HCT116 (cell line): ENCODE measurements at regions of chr1 and their contacts with region 1.

Region 1: DNA sequence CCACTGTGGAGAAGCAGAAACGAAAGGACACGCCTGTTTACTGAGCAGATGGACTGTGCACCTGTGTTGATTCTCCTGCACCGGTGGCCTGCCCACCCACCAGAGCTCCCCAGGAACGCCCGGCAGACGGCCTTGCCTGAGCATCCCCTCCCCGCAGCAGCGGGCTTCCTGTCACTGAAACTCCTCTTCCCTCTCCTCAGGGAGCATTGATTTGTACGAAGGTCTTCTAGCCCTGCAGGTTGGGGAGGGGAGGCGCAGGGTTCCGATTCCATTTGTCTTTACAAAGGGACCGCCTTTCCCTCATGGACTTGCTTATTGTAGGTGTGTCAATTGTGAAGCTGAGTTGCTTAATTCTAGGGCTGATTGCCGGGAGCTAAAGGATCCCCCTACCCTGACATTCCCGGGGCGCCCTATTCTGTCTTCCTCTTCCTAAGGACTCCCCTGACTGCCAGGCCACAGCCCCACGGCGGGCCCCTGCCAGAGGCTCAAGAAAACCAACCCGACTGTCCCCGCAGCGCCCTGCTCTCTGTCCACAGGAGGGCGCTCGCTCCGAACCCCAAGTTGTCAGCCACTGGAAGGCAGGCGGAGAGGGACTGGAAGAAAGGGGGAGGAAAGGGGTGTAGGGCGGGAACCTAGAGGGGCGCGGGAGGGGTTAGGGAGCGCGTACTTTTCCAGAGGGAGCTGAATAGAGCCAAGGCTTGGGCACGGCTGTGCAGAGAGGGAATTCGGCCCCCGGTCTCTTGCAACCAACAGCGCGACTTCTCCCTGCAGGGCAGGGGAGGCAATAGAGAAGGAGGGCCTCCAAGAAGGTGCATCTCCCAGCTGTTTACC is 2.8 kb downstream of the S100A6 start:
- DNase-seq: peak; percentile 81
- ATAC-seq: peak; percentile 48
- H3K4me3 ChIP-seq: peak overlapping the region; percentile 74 to 89
- H3K27ac ChIP-seq: peak overlapping the region; percentile 94
- H3K4me1 ChIP-seq: peaks cover 46 to 60% of the 10 kb centered on the region in 2 experiments
- H3K27me3 ChIP-seq: no peaks in the 10 kb centered on the region
- CTCF ChIP-seq: peak in 2 of 3 experiments; percentile 93 to 96; a peak in 4 of 6 replicates
- POLR2A ChIP-seq: no peak
- RAD21 ChIP-seq: no peak

Region 2: GRCh38 chr1:153520230-153520629 is 12.8 kb before region 1 on chr1:
- CTCF ChIA-PET with region 1: interaction called, 20 read pairs
- POLR2A ChIA-PET with region 1: interaction called, 51 read pairs
- RAD21 ChIA-PET with region 1: no interaction called
- intact Hi-C with region 1: no loop called
- DNase-seq: no peak
- ATAC-seq: no peak
- H3K4me3 ChIP-seq: no peak overlapping the region
- H3K27ac ChIP-seq: no peak overlapping the region
- H3K4me1 ChIP-seq: peaks cover 29 to 35% of the 10 kb centered on the region in 2 experiments
- H3K27me3 ChIP-seq: no peaks in the 10 kb centered on the region
- CTCF ChIP-seq: no peak
- POLR2A ChIP-seq: no peak
- RAD21 ChIP-seq: no peak

Region 3: DNA sequence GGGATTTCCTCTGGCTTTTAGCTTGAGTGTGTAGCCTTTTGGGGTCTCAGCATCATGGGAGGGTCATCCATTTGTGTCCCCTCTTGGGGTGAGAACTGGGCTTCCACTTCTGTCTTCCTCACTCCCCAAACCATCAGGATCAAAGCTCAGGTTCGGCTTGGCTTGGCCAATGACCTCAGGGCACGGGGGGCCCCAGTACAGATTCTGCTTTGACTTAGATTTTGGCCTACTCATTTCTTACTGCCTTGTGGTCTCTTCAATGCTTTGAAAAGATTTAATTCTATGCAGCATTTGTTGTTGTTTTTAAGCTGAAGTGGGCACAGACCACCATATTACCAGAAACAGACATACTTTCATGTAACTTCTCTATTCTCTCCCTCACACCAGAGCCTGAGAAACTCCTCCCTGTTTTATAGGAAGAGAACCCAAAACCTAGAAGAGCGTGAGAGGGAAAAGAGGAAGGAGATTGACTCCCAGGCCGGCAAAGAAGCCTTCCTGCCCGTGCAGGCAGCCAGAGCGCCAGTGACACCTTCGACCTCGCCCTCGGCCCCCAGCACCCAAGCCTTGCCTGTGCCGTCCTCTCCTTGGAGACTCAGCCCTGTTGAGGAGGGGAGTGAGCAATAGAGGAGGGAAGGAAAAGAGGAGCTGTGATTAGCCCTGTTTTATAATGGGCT is 18.0 kb after region 1 on chr1:
- CTCF ChIA-PET with region 1: interaction called, 11 read pairs
- POLR2A ChIA-PET with region 1: interaction called, 78 read pairs
- RAD21 ChIA-PET with region 1: interaction called in 1 of 2 experiments, 3 read pairs
- intact Hi-C with region 1: no loop called
- DNase-seq: no peak
- ATAC-seq: no peak
- H3K4me3 ChIP-seq: no peak overlapping the region
- H3K27ac ChIP-seq: no peak overlapping the region
- H3K4me1 ChIP-seq: peaks cover 59 to 84% of the 10 kb centered on the region in 2 experiments
- H3K27me3 ChIP-seq: no peaks in the 10 kb centered on the region
- CTCF ChIP-seq: no peak
- POLR2A ChIP-seq: no peak
- RAD21 ChIP-seq: no peak

Region 4: GRCh38 chr1:153561466-153561985 is 28.5 kb after region 1 on chr1:
- CTCF ChIA-PET with region 1: interaction called, 12 read pairs
- POLR2A ChIA-PET with region 1: interaction called, 114 read pairs
- RAD21 ChIA-PET with region 1: interaction called, 3 to 6 read pairs
- intact Hi-C with region 1: loop called (anchors 1 kb)
- DNase-seq: no peak
- ATAC-seq: no peak
- H3K4me3 ChIP-seq: no peak overlapping the region
- H3K27ac ChIP-seq: no peak overlapping the region
- H3K4me1 ChIP-seq: peaks cover 36 to 51% of the 10 kb centered on the region in 2 experiments
- H3K27me3 ChIP-seq: no peaks in the 10 kb centered on the region
- CTCF ChIP-seq: no peak
- POLR2A ChIP-seq: no peak
- RAD21 ChIP-seq: no peak

Region 5: GRCh38 chr1:153572569-153573015 is 39.6 kb after region 1 on chr1:
- CTCF ChIA-PET with region 1: interaction called, 35 read pairs
- POLR2A ChIA-PET with region 1: interaction called, 93 read pairs
- RAD21 ChIA-PET with region 1: interaction called, 5 to 11 read pairs
- intact Hi-C with region 1: loop called (anchors 1 kb)
- DNase-seq: peak; percentile 84
- ATAC-seq: peak; percentile 82
- H3K4me3 ChIP-seq: peak overlapping the region in 1 of 2 experiments; percentile 20; a peak in 1 of 4 replicates
- H3K27ac ChIP-seq: peak overlapping the region; percentile 57
- H3K4me1 ChIP-seq: peaks cover 32 to 53% of the 10 kb centered on the region in 2 experiments
- H3K27me3 ChIP-seq: no peaks in the 10 kb centered on the region
- CTCF ChIP-seq: peak in 2 of 3 experiments; percentile 91 to 97; a peak in 4 of 6 replicates
- POLR2A ChIP-seq: no peak
- RAD21 ChIP-seq: no peak

Region 6: DNA sequence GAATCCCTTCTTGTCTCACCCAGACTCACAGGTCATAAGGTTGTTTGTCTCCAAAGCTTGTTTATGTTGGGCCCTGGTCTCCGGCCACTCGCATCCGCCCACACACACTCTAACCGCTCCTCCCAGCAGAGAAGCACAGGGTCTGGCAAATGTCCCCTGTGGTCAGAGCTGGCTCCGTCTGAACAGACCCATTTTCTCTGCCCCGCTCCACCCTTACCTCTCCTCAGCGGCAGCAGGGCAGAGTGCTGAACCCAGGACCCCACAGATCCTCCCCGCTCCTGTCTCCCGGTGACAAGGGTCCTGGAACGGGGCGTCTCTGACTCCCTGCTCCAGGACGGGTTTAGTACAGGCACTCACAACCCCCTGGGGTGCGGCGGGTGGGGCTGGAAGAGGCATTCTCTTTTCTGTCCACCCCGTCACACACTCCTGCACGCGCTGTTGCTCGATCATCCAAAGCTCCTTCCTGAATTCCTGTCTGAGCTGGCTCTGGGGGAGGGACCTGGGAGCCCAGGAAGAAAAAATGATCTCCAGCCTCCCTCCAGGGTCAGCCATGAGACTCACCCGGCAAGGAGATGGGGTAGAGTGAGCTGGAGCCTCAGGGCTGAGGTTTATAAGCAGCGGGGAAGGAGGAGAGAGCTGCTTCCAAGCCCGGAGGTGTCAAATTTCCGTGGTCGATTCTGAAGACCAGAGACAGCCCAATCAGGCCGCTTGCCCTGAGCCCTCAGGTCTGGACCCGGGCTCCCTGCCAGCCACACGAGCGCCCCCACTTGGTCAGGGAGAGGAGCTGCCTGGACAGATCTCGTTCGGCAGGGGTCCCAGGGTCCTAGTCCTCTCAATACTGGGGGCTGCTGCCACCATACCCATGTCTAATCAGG is 94.2 kb after region 1 on chr1 and contains the start of gene S100A13:
- CTCF ChIA-PET with region 1: interaction called, 7 read pairs
- POLR2A ChIA-PET with region 1: interaction called, 23 read pairs
- RAD21 ChIA-PET with region 1: no interaction called
- intact Hi-C with region 1: no loop called
- DNase-seq: peak; percentile 93
- ATAC-seq: peak; percentile 87
- H3K4me3 ChIP-seq: peak within 1 kb of the TSS; percentile 65 to 72
- H3K27ac ChIP-seq: peak within 1 kb of the TSS; percentile 89
- H3K4me1 ChIP-seq: peaks cover 18 to 34% of the 10 kb centered on the region in 2 experiments
- H3K27me3 ChIP-seq: no peaks in the 10 kb centered on the region
- CTCF ChIP-seq: peak in 2 of 3 experiments; percentile 87 to 89; a peak in 4 of 6 replicates
- POLR2A ChIP-seq: peak; percentile 94
- RAD21 ChIP-seq: no peak
- total RNA-seq, gene S100A13: 143 TPM